PC-3 (cell line): ENCODE measurements at regions of chr2 and their contacts with region 1.

Region 1: DNA sequence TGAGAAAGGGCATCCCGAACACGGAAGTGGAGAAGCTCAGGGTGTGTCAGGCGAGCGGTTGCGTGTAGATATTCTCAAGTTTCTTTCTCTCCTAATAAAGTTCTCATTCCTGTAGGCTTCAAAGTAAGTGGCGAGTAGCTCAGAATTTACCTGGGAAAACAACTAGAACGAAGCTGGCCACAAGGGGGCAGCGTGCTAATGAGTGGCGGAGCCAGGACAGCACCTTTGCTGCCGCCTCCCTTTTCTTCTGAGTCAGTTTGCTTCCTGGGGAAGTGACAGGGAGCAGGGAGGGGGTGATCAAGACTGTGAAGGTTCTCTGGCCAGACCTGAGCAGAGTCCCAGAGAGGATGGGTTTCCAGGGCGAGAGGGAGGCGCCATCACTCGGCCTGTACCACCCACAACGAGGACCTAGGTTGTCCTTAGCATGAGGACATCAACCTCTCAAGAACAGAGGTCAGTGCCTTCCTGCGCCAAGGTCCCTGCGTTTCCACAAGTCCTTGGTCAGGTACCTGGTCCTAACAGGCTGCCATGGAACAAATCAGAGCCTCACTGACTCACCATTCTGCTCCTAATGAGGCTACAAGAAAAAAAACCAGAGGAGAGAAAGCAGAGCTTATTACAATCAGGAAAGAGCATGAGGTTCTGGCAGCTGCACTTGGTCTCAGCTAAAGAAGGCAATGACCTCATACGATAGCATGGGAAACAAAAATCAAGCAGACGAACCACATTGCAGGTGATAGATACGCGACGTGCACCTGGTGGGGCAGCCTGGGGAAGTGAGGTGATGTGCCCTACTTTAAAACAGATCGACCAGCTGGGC is 98.6 kb downstream of the PLB1 start:
- DNase-seq: peak; percentile 99
- ATAC-seq: peak; percentile 96
- H3K4me3 ChIP-seq: no peak overlapping the region
- H3K27ac ChIP-seq: peak overlapping the region; percentile 81
- H3K4me1 ChIP-seq: peaks cover 30% of the 10 kb centered on the region
- H3K27me3 ChIP-seq: no peaks in the 10 kb centered on the region
- CTCF ChIP-seq: peak; percentile 91

Region 2: DNA sequence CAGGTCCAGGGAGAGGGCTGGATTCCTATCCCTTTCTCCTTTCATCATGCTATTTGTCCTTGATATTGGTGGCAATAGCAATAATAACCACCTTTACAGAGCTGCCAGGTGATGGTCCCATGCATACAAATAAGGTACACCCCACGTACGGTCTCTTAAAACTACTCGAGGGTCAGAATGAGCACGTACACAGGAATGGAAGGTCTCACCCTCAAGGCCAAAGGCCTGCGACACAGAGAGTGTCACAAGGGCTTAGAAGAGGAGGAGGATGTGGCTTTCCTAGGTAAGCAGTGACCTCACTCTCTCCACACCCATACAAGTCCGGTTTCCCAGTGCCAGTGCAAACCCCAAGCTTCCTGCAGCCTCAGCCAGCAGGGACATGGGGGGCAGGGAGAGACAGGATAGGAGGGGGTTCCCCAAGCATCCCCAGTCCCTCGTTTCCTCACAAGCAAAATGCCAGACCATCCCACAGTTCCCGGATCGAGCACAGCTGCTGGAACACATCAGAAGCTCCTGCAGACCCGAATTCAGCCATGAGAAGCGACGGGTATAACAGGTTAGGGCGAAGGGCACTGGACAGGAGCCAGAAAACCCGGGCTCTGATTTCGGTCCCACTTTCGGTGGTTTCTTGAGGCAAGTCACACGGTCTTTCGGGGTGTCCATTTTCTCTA is 49.4 kb before region 1 on chr2:
- CTCF ChIA-PET with region 1: interaction called, 10 read pairs
- POLR2A ChIA-PET with region 1: no interaction called
- intact Hi-C with region 1: no loop called
- DNase-seq: peak; percentile 24
- ATAC-seq: peak; percentile 64
- H3K4me3 ChIP-seq: no peak overlapping the region
- H3K27ac ChIP-seq: no peak overlapping the region
- H3K4me1 ChIP-seq: peaks cover 11% of the 10 kb centered on the region
- H3K27me3 ChIP-seq: no peaks in the 10 kb centered on the region
- CTCF ChIP-seq: no peak

Region 3: GRCh38 chr2:28583899-28584553 is 10.5 kb before region 1 on chr2:
- CTCF ChIA-PET with region 1: interaction called, 9 read pairs
- POLR2A ChIA-PET with region 1: interaction called, 7 read pairs
- intact Hi-C with region 1: loop called (anchors 1 kb)
- DNase-seq: peak; percentile 97
- ATAC-seq: peak; percentile 94
- H3K4me3 ChIP-seq: peak overlapping the region; percentile 46
- H3K27ac ChIP-seq: peak overlapping the region; percentile 96
- H3K4me1 ChIP-seq: peaks cover 38% of the 10 kb centered on the region
- H3K27me3 ChIP-seq: no peaks in the 10 kb centered on the region
- CTCF ChIP-seq: no peak

Region 4: DNA sequence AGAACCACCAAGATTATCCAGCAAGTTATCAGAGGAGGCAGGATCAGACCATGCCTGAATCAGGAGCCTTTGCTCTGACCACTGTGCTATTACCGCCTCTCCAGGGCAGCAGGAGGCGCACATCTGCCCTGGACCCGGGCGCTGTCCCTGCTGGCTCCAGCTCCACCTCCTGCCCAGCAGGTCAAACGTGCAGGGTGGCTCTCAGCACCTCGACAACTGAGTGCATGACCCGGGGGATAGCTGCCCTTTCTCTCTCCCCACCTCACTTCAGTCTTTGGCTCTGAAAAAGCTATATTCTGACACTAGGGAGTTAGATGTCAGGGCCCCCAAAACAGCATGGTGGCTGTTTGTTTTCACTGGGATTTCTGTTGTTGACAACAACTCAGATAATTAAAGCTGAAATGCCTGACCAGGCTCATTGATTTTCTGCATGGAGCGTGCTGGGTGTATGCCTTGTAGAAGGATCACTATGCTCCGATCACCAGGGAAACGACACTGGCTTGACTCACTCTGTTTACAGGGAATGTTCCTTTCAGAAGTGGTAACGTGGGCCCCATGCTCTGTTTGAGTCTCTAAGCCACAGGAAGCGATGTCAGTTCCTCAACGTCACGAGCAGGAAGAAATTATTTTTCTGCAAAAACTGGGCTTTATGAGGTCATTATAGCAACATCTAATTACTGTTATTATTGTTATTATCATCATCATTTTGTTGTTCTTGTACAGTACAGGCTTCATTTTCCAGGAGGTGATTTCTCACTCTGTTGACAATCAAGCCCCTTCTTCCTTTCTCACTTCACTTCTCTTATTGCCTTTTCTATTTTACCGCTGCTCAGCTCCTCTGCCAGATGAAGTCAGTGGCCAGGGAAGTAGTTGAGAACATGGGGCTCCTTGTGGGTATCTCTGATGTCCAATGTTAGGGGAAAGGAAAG is 26.9 kb after region 1 on chr2:
- CTCF ChIA-PET with region 1: interaction called, 10 read pairs
- POLR2A ChIA-PET with region 1: no interaction called
- intact Hi-C with region 1: loop called (anchors 1 kb)
- DNase-seq: peak; percentile 92
- ATAC-seq: peak; percentile 98
- H3K4me3 ChIP-seq: peak overlapping the region; percentile 11; the same call in 1 of the 2 replicates
- H3K27ac ChIP-seq: peak overlapping the region; percentile 87
- H3K4me1 ChIP-seq: peaks cover 51% of the 10 kb centered on the region
- H3K27me3 ChIP-seq: no peaks in the 10 kb centered on the region
- CTCF ChIP-seq: peak; percentile 80